ENCODE measurements at regions of chr18 and their contacts with region 1.

Region 1: GRCh38 chr18:31942999-31943865 is at the start of gene TRAPPC8:
- DNase-seq: peak; percentile 94
- H3K4me3 Mint-ChIP-seq: peak within 1 kb of the TSS; percentile 100
- H3K27ac Mint-ChIP-seq: peak within 1 kb of the TSS; percentile 98
- H3K4me1 Mint-ChIP-seq: peaks cover 51% of the 10 kb centered on the region
- H3K27me3 Mint-ChIP-seq: no peaks in the 10 kb centered on the region
- total RNA-seq, gene TRAPPC8: 40.1 to 42.7 TPM

Region 2: GRCh38 chr18:32086861-32087260 is 143.6 kb after region 1 on chr18:
- CTCF ChIA-PET with region 1: interaction called, 6 read pairs
- POLR2A ChIA-PET with region 1: interaction called, 54 read pairs
- DNase-seq: no peak
- H3K4me3 Mint-ChIP-seq: no peak overlapping the region
- H3K27ac Mint-ChIP-seq: peak overlapping the region; percentile 5
- H3K4me1 Mint-ChIP-seq: peaks cover 43% of the 10 kb centered on the region
- H3K27me3 Mint-ChIP-seq: peaks cover 2% of the 10 kb centered on the region